Activated B cell treated with CpG ODN at 0.5 μM for 24 hours (primary cell): ENCODE measurements at regions of chr3 and their contacts with region 1.

Region 1: DNA sequence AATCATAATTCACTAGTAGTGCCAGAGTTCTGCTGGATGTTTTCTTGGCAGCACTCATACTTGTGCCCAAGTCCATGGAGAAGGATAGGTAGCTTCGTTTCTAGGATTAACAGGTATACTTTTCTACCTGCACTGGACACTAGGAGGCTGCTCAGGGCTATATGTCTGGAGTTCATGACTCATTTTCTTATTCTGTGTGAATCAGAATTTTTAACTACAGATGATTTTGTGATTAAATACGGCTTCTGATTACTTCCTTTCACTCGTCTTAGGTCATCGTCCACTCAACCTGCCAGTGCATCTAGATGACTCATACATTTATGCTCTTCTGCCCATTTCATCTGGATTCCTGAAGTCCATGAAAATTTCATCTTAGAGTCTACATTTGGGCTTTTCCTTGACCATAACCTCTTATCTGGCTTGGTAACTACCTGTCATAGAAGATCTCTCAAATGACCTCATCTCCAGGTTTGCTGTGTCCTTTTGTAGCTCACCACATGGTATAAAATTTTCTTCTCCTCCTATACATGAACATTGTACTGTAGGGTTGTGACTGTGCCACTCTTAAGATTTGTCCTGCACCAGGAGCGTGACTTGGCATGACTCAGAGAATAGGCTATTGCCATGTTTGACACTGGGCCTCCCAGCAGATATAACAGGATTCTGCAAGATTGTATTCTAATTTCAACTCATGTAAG is 66.7 kb upstream of the GCSAM start:
- DNase-seq: no peak
- ATAC-seq: no peak
- H3K4me3 Mint-ChIP-seq: no peak overlapping the region
- H3K27ac Mint-ChIP-seq: no peak overlapping the region
- H3K4me1 Mint-ChIP-seq: no peaks in the 10 kb centered on the region
- H3K27me3 Mint-ChIP-seq: no peaks in the 10 kb centered on the region
- CTCF ChIP-seq: no peak

Region 2: GRCh38 chr3:111751961-111752360 is 447.8 kb before region 1 on chr3:
- CTCF ChIA-PET with region 1: no interaction called
- POLR2A ChIA-PET with region 1: no interaction called
- intact Hi-C with region 1: no loop called
- DNase-seq: no peak
- ATAC-seq: no peak
- H3K4me3 Mint-ChIP-seq: no peak overlapping the region
- H3K27ac Mint-ChIP-seq: no peak overlapping the region
- H3K4me1 Mint-ChIP-seq: no peaks in the 10 kb centered on the region
- H3K27me3 Mint-ChIP-seq: no peaks in the 10 kb centered on the region
- CTCF ChIP-seq: no peak

Region 3: DNA sequence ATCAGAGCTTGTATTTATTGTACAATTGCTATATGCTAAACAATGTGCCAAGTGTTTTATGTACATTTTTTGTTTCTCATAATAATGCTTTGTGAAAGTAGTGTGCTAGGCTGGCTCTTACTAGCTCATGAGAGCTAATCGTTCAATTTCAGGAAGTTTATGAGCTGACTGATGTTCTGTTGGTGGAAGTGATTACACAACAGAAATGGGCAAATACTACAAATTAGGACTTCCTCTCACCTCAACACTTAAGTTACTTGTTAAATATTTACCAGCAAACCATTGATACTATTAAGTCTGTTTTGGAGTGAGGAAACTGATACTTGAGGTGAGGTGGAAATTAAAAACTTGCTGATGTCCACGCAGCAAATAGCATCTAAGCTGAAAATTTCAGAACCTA is 62.0 kb after region 1 on chr3:
- CTCF ChIA-PET with region 1: no interaction called
- POLR2A ChIA-PET with region 1: no interaction called
- intact Hi-C with region 1: loop called (anchors 5 kb)
- DNase-seq: no peak
- ATAC-seq: no peak
- H3K4me3 Mint-ChIP-seq: no peak overlapping the region
- H3K27ac Mint-ChIP-seq: no peak overlapping the region
- H3K4me1 Mint-ChIP-seq: no peaks in the 10 kb centered on the region
- H3K27me3 Mint-ChIP-seq: no peaks in the 10 kb centered on the region
- CTCF ChIP-seq: no peak